CD4-positive, alpha-beta memory T cell (primary cell): ENCODE measurements at regions of chr14 and their contacts with region 1.

Region 1: DNA sequence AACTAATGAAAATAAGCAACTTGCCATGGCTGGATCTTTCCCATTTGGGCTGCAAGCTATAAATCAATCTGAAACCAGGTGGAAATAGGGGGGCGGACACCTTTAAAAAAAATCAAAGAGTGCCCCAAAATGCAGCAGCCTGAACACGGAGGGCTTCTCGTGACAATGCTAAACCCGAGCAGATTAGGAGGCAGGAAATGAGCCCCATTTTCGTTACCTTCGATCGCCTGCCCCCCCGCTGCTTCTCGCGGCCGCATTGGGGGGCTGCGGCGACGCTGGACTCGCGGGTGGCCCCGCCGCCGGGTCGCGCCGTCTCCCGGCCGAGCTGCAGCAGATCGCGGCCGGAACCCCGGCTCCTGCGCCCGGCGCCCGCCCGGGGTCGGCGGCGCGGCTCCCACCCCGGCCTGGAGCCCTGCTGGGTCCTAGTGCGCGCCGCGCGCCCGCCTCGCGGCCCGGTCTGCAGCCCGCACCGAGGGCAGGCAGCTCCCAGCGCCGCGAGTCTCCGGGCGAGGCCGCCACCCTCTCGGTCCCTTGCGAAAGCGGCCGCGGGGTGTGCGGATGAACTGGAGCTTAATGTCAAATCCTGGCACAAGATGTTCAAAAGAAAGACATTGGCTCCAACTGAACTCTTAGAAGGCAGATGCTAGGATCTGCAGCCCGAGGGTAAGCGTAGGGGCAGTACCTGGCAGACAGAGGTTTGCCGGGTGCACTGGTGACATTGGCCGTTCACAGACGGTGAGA is 201.9 kb upstream of the FOXN3 start:
- DNase-seq: peak; percentile 75 to 84 (median 78)
- H3K4me3 ChIP-seq: peak overlapping the region; percentile 49 to 90
- H3K4me3 Mint-ChIP-seq: peak overlapping the region; percentile 94 to 99 (median 97)
- H3K27ac ChIP-seq: peak overlapping the region; percentile 80
- H3K27ac Mint-ChIP-seq: peak overlapping the region; percentile 91 to 98 (median 96)
- H3K4me1 ChIP-seq: peaks cover 60% of the 10 kb centered on the region
- H3K4me1 Mint-ChIP-seq: peaks cover 48 to 80% (median 63%) of the 10 kb centered on the region in 4 donors
- H3K27me3 ChIP-seq: no peaks in the 10 kb centered on the region
- H3K27me3 Mint-ChIP-seq: no peaks in the 10 kb centered on the region

Region 2: DNA sequence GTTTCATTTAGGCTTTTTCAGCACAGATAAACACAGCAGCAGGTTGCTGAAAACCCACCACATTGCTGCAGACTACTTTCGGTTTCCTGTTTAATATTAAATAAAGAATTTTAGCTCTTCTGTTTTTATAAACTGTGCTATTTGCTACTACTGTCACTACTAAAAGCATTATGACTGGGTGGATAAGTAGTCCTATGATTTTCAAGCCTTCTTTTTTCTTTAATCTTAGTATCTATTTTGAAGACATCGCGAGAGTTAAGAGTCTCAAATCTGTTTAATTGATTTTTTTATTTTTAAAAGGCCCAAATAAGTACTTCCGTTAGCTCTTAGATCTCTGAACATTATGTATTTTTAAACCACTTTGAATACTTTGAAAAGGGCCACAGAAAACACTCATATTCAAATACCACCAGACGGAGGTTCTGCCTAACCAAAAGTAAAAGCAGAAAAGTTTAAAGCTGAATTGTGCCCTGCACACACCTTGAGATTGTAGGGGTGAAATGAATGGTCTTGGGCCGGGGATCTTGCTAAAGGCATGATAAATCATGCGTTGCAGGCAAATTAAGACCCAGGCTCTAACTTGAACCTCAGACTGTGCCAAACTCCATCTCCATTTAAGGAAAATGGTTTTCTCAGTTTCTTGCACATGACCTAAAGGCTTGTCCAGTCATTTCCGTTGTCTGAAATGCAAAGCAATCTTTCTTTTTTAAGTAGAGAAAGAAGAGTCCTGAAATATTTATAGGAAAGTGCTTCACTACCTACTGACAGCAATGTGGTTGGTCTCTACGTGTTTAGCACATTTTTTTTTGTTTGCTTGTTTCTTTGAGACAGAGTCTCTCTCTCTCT is 188.4 kb before region 1 on chr14:
- CTCF ChIA-PET with region 1: no interaction called
- POLR2A ChIA-PET with region 1: interaction called, 10 read pairs
- intact Hi-C with region 1: loop called (anchors 5 kb)
- DNase-seq: peak; percentile 61 to 81 (median 78)
- H3K4me3 ChIP-seq: peak overlapping the region; percentile 1 to 30
- H3K4me3 Mint-ChIP-seq: peak overlapping the region; percentile 68 to 91 (median 87)
- H3K27ac ChIP-seq: peak overlapping the region; percentile 45
- H3K27ac Mint-ChIP-seq: peak overlapping the region; percentile 73 to 96 (median 89)
- H3K4me1 ChIP-seq: peaks cover 36% of the 10 kb centered on the region
- H3K4me1 Mint-ChIP-seq: peaks cover 33 to 67% (median 47%) of the 10 kb centered on the region in 4 donors
- H3K27me3 ChIP-seq: no peaks in the 10 kb centered on the region
- H3K27me3 Mint-ChIP-seq: no peaks in the 10 kb centered on the region

Region 3: DNA sequence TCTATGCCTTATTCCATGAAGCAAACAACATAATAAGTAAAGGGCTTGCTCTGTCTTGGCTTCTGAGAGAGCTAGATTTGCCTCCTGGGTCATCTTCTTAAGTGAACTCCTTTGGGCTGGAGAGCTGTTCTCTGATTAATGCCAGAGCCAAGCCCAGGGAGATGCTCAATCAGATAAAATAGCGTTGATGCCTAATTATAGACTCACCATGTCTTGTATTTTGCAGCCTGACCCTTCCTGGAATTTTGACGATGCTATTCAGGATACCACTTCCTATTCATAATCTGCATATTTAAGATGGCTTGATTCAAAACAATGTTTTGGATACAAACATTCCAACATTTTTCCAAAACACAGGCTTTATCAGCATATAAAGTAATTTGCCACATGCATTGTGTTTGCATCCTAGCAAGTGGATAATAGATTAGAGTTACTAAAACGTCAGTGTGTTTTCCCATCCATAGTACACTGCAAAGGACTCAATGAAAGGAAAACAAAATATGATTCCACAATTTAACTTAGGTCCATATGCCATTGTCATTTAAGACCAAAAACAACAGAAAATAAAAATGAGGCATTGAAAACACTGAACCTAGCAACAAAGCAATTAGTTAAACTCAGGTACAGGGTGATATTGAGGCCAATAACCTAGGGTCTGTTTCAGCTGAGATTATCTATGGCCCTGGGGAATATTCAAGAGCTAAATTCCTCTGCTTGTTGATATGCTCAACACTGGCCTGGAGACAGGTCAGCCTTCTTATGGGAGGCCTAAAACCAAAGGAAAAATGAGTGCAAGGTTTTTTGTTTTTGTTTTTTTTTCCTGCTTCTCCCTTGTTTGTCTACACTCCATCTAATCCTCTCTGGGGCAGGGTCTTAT is 17.8 kb before region 1 on chr14:
- CTCF ChIA-PET with region 1: no interaction called
- POLR2A ChIA-PET with region 1: interaction called, 14 read pairs
- intact Hi-C with region 1: loop called (anchors 2 kb)
- DNase-seq: no peak
- H3K4me3 ChIP-seq: no peak overlapping the region
- H3K4me3 Mint-ChIP-seq: no peak overlapping the region
- H3K27ac ChIP-seq: no peak overlapping the region
- H3K27ac Mint-ChIP-seq: no peak overlapping the region
- H3K4me1 ChIP-seq: peaks cover 18% of the 10 kb centered on the region
- H3K4me1 Mint-ChIP-seq: peaks cover 21 to 42% (median 33%) of the 10 kb centered on the region in 4 donors
- H3K27me3 ChIP-seq: no peaks in the 10 kb centered on the region
- H3K27me3 Mint-ChIP-seq: no peaks in the 10 kb centered on the region

Region 4: DNA sequence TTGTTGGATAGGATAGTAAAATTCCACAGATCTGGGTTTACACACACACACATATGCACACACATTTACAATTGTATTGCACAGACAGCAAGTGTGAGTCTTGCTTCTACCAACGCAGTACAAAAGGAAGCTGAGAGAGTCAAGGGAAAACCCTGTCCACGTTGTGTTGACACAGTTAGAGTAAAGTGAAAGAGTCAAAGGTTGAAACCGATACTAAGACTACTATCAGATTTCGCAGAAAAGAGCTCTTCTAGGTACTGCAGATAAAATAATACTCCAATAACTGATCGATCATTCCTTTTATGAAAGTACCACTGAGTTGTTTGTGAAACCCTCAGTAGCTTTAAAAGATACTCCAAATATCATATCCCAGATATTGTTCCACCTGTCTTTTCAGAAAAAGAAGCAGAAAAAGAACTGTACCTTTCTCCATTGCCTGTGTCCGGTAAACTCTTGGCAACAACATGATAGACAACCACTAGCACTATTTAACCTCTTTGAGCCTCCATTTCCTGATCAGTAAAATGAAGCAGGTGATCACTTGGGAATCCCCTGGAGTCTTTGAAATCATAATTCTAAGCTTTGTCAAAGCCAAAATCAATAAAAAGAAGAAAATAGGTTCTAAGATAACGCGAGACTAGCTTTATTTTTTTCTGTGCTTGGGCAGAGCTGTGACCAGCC is 22.7 kb after region 1 on chr14:
- CTCF ChIA-PET with region 1: interaction called, 5 read pairs
- POLR2A ChIA-PET with region 1: interaction called, 47 read pairs
- intact Hi-C with region 1: loop called (anchors 2 kb)
- DNase-seq: peak in 4 of 5 donors; percentile 17 to 46 (median 34)
- H3K4me3 ChIP-seq: peak overlapping the region in 1 of 2 donors; percentile 37
- H3K4me3 Mint-ChIP-seq: peak overlapping the region; percentile 47 to 84 (median 73)
- H3K27ac ChIP-seq: peak overlapping the region; percentile 55
- H3K27ac Mint-ChIP-seq: peak overlapping the region; percentile 89 to 93 (median 92)
- H3K4me1 ChIP-seq: peaks cover 38% of the 10 kb centered on the region
- H3K4me1 Mint-ChIP-seq: peaks cover 29 to 53% (median 38%) of the 10 kb centered on the region in 4 donors
- H3K27me3 ChIP-seq: no peaks in the 10 kb centered on the region
- H3K27me3 Mint-ChIP-seq: no peaks in the 10 kb centered on the region

Region 5: GRCh38 chr14:89681086-89682018 is 62.4 kb after region 1 on chr14:
- CTCF ChIA-PET with region 1: interaction called, 3 read pairs
- POLR2A ChIA-PET with region 1: interaction called, 21 read pairs
- intact Hi-C with region 1: no loop called
- DNase-seq: peak in 3 of 5 donors; percentile 15 to 51 (median 16)
- H3K4me3 ChIP-seq: peak overlapping the region; percentile 24 to 35
- H3K4me3 Mint-ChIP-seq: peak overlapping the region; percentile 65 to 87 (median 76)
- H3K27ac ChIP-seq: peak overlapping the region; percentile 33
- H3K27ac Mint-ChIP-seq: peak overlapping the region; percentile 79 to 95 (median 93)
- H3K4me1 ChIP-seq: peaks cover 35% of the 10 kb centered on the region
- H3K4me1 Mint-ChIP-seq: peaks cover 26 to 49% (median 32%) of the 10 kb centered on the region in 4 donors
- H3K27me3 ChIP-seq: no peaks in the 10 kb centered on the region
- H3K27me3 Mint-ChIP-seq: no peaks in the 10 kb centered on the region

Region 6: DNA sequence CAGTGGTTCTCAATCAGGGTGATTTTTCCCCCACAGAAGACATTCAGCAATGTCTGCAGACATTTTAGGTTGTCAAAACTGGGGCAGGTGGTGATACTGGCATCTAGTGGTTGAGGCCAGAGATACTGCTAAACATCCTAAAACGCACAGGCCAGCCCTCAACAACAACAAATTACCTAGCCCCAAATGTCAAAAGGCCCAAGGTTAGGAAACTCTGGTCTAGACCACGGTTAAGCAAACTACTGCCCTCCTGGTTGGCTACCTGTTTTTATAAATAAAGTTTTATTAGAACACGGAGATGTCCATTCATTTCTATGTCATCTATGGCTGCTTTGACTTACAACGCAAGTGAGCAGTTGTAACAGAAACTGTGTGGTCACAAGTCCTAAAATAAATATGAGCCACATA is 148.9 kb after region 1 on chr14:
- CTCF ChIA-PET with region 1: interaction called, 3 read pairs
- POLR2A ChIA-PET with region 1: interaction called, 3 read pairs
- intact Hi-C with region 1: loop called (anchors 1 kb)
- DNase-seq: peak; percentile 64 to 69 (median 67)
- H3K4me3 ChIP-seq: no peak overlapping the region
- H3K4me3 Mint-ChIP-seq: peak overlapping the region in 4 of 8 donors; percentile 51 to 62 (median 60)
- H3K27ac ChIP-seq: no peak overlapping the region
- H3K27ac Mint-ChIP-seq: peak overlapping the region in 2 of 7 donors; percentile 2 to 56
- H3K4me1 ChIP-seq: peaks cover 9% of the 10 kb centered on the region
- H3K4me1 Mint-ChIP-seq: peaks cover 13 to 32% (median 25%) of the 10 kb centered on the region in 4 donors
- H3K27me3 ChIP-seq: no peaks in the 10 kb centered on the region
- H3K27me3 Mint-ChIP-seq: peaks cover 0 to 2% of the 10 kb centered on the region in 2 donors